ENCODE measurements at regions of chr9 and their contacts with region 1.

Region 1: DNA sequence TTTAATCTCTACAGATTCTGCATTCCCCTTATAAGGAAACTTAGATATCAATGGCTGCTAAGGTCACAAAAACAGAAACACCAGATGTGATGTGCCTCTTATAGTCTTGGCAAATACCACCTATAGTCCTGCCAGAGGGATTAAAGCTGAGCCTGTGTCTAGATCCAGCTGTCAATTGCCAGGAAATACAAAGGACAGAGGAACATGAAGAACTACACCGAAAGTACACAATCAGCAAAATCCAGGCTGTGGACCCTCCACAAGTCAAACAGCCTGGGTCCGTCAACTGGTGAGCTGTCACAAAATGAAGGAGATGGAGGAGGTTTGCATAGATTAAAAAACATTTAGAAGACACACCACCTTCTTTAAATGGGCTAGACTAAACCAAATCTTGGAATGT is 85.4 kb downstream of the KLF4 start:
- DNase-seq: no peak
- H3K4me3 ChIP-seq: no peak overlapping the region
- H3K27ac ChIP-seq: no peak overlapping the region
- H3K4me1 ChIP-seq: no peaks in the 10 kb centered on the region
- H3K27me3 ChIP-seq: no peaks in the 10 kb centered on the region
- CTCF ChIP-seq: no peak

Region 2: GRCh38 chr9:107600060-107600573 is 196.0 kb after region 1 on chr9:
- CTCF ChIA-PET with region 1: no interaction called
- POLR2A ChIA-PET with region 1: no interaction called
- intact Hi-C with region 1: no loop called
- DNase-seq: no peak
- H3K4me3 ChIP-seq: no peak overlapping the region
- H3K27ac ChIP-seq: no peak overlapping the region
- H3K4me1 ChIP-seq: no peaks in the 10 kb centered on the region
- H3K27me3 ChIP-seq: no peaks in the 10 kb centered on the region
- CTCF ChIP-seq: no peak

Region 3: GRCh38 chr9:108953983-108954574 is 1549.9 kb after region 1 on chr9:
- CTCF ChIA-PET with region 1: interaction called, 10 read pairs
- POLR2A ChIA-PET with region 1: no interaction called
- intact Hi-C with region 1: no loop called
- DNase-seq: peak; percentile 42
- H3K4me3 ChIP-seq: no peak overlapping the region
- H3K27ac ChIP-seq: no peak overlapping the region
- H3K4me1 ChIP-seq: no peaks in the 10 kb centered on the region
- H3K27me3 ChIP-seq: no peaks in the 10 kb centered on the region
- CTCF ChIP-seq: peak; percentile 72